Right cardiac atrium (tissue), 5 donors: ENCODE measurements at regions of chr18 and their contacts with region 1.

Region 1: GRCh38 chr18:47100214-47100831 is 50.0 kb downstream of the HDHD2 start:
- DNase-seq: peak in 2 of 3 donors; percentile 19 to 47
- ATAC-seq: peak; percentile 74 to 76
- H3K4me3 ChIP-seq: no peak overlapping the region
- H3K27ac ChIP-seq: no peak overlapping the region
- H3K4me1 ChIP-seq: no peaks in the 10 kb centered on the region
- H3K27me3 ChIP-seq: no peaks in the 10 kb centered on the region

Region 2: GRCh38 chr18:46891742-46892214 is 208.5 kb before region 1 on chr18:
- intact Hi-C with region 1: no loop called
- DNase-seq: no peak
- ATAC-seq: no peak
- H3K4me3 ChIP-seq: no peak overlapping the region
- H3K27ac ChIP-seq: no peak overlapping the region
- H3K4me1 ChIP-seq: peaks cover 1% of the 10 kb centered on the region
- H3K27me3 ChIP-seq: no peaks in the 10 kb centered on the region

Region 3: GRCh38 chr18:47184419-47185050 is 84.2 kb after region 1 on chr18:
- intact Hi-C with region 1: no loop called
- DNase-seq: no peak
- ATAC-seq: no peak
- H3K4me3 ChIP-seq: no peak overlapping the region
- H3K27ac ChIP-seq: no peak overlapping the region
- H3K4me1 ChIP-seq: no peaks in the 10 kb centered on the region
- H3K27me3 ChIP-seq: no peaks in the 10 kb centered on the region

Region 4: GRCh38 chr18:47204908-47205522 is 104.7 kb after region 1 on chr18:
- intact Hi-C with region 1: loop called in 3 of 4 experiments (anchors 2 to 5 kb)
- DNase-seq: peak in 1 of 3 donors; percentile 49
- ATAC-seq: peak in 1 of 2 donors; percentile 42
- H3K4me3 ChIP-seq: no peak overlapping the region
- H3K27ac ChIP-seq: no peak overlapping the region
- H3K4me1 ChIP-seq: no peaks in the 10 kb centered on the region
- H3K27me3 ChIP-seq: no peaks in the 10 kb centered on the region

Region 5: DNA sequence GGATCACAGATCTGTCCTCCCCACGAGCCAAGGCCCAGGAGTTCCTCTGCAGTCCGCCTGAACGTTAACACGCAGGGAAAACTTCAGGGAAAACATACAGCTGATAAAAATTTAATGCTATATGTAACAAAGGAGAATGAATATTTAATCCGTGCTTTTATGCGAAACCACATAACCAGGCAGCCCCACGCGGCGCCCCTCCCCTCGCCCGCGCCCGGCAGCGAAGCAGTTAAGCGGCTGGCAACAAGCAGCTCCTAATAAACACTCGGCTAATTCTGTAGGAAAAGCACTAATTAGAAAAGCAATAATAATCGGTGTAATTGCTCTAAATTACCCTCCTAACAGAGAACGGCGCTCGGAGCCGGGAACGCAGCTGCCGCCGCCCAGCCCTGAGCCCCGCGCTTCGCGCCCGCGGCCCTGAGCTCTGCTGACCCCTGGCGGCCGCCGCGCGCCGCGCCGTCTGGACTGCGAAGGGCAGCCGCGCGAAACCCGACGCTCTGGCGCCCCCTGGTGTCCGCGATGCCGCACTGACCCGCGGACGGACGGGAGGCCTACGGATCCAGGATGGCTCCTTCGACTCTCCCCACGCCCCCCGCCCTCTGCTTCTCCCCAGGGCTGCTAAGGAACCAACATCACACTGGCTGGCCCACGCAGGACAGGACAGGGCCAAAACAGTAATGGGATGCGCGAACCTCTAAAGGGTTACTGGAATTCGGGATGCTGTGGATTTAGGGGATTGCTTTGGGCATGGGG is 648.7 kb after region 1 on chr18:
- intact Hi-C with region 1: loop called (anchors 10 kb)
- DNase-seq: peak; percentile 75 to 94 (median 92)
- ATAC-seq: peak; percentile 93 to 94
- H3K4me3 ChIP-seq: peak overlapping the region; percentile 40
- H3K27ac ChIP-seq: no peak overlapping the region
- H3K4me1 ChIP-seq: no peaks in the 10 kb centered on the region
- H3K27me3 ChIP-seq: no peaks in the 10 kb centered on the region

Region 6: GRCh38 chr18:47756364-47757016 is 656.2 kb after region 1 on chr18:
- intact Hi-C with region 1: loop called in 2 of 4 experiments (anchors 10 kb)
- DNase-seq: peak; percentile 55 to 78 (median 75)
- ATAC-seq: peak; percentile 66 to 68
- H3K4me3 ChIP-seq: no peak overlapping the region
- H3K27ac ChIP-seq: no peak overlapping the region
- H3K4me1 ChIP-seq: no peaks in the 10 kb centered on the region
- H3K27me3 ChIP-seq: no peaks in the 10 kb centered on the region